ENCODE measurements at regions of chr2 and their contacts with region 1.

Region 1: DNA sequence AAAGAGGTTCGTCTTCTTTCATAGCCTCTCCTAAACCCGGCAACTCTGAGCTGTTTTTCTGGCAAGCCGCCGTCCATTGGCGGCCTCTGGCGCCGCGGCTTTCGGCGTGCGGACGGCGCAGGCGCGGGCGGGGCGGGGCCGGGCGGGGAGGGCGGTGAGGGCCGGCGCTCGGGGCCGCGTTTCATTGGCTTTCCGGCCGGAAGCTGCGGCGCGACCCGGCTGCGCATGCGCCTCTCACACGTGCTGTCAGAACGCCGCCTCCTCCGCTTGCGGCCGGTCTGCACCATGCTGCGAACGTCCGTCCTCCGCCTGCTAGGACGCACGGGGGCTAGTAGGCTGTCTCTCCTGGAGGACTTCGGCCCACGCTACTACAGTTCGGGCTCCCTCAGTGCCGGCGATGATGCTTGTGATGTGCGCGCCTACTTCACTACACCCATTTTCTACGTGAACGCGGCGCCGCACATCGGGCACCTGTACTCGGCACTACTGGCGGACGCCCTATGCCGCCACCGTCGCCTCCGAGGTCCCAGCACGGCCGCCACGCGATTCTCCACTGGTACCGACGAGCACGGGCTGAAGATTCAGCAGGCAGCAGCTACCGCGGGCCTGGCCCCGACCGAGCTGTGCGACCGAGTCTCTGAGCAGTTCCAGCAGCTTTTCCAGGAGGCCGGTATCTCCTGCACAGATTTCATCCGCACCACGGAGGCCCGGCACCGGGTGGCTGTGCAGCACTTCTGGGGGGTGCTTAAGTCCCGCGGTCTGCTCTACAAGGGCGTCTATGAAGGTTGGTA is at the start of gene MARS2:
- DNase-seq: peak; percentile 93
- H3K4me3 ChIP-seq: peak within 1 kb of the TSS; percentile 96
- H3K27ac ChIP-seq: peak within 1 kb of the TSS; percentile 69
- H3K4me1 ChIP-seq: peaks cover 5% of the 10 kb centered on the region
- H3K27me3 ChIP-seq: no peaks in the 10 kb centered on the region
- CTCF ChIP-seq: no peak
- total RNA-seq, gene MARS2: 8.3 to 17.0 TPM

Region 2: GRCh38 chr2:196565106-196565765 is 1140.1 kb before region 1 on chr2:
- intact Hi-C with region 1: no loop called
- DNase-seq: no peak
- H3K4me3 ChIP-seq: no peak overlapping the region
- H3K27ac ChIP-seq: no peak overlapping the region
- H3K4me1 ChIP-seq: no peaks in the 10 kb centered on the region
- H3K27me3 ChIP-seq: no peaks in the 10 kb centered on the region
- CTCF ChIP-seq: no peak

Region 3: GRCh38 chr2:197777823-197778407 is 72.6 kb after region 1 on chr2:
- intact Hi-C with region 1: loop called (anchors 5 kb)
- DNase-seq: no peak
- H3K4me3 ChIP-seq: no peak overlapping the region
- H3K27ac ChIP-seq: no peak overlapping the region
- H3K4me1 ChIP-seq: no peaks in the 10 kb centered on the region
- H3K27me3 ChIP-seq: no peaks in the 10 kb centered on the region
- CTCF ChIP-seq: peak; percentile 68